OCI-LY7 (cell line): ENCODE measurements at regions of chr2 and their contacts with region 1.

Region 1: GRCh38 chr2:37039580-37039979 is 44.6 kb downstream of the HEATR5B start:
- DNase-seq: no peak
- H3K4me3 ChIP-seq: no peak overlapping the region
- H3K27ac ChIP-seq: no peak overlapping the region
- H3K4me1 ChIP-seq: no peaks in the 10 kb centered on the region
- CTCF ChIP-seq: no peak

Region 2: GRCh38 chr2:36659872-36660312 is 379.7 kb before region 1 on chr2:
- CTCF ChIA-PET with region 1: no interaction called
- POLR2A ChIA-PET with region 1: no interaction called
- intact Hi-C with region 1: no loop called
- DNase-seq: no peak
- H3K4me3 ChIP-seq: no peak overlapping the region
- H3K27ac ChIP-seq: no peak overlapping the region
- H3K4me1 ChIP-seq: no peaks in the 10 kb centered on the region
- CTCF ChIP-seq: no peak

Region 3: DNA sequence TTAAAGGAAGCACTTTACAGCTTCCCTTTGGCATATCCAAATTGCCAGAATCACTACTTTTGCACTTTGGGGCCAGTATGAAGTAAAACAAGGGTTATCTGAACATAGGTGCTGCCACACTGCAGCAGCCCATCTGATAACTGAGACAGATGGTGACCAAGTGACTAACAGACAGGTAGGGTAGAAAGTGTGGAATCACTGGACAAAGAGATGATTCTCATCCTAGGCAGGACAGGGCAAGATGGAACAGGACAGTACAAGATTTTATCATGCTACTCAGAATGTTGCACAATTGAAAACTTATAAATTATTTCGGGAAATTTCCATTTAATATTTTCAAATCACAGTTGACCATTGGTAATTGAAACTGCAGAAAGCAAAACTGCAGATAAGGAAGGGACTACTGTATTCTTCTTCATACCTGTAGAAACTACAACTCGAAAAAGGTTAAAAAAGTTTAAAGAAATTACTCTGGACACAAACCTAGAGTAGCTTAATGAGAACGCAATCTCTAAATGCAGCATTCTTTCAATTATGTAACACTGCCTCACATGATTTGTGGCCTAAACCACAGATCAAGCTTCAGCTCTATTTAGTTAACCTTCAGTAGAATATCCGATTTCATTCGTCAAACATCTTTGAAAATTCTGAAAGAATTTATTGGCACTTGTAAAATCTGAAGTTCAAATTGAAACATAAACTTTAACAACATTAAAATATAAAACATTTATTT is 13.2 kb after region 1 on chr2:
- CTCF ChIA-PET with region 1: no interaction called
- POLR2A ChIA-PET with region 1: interaction called, 12 read pairs
- intact Hi-C with region 1: no loop called
- DNase-seq: no peak
- H3K4me3 ChIP-seq: no peak overlapping the region
- H3K27ac ChIP-seq: no peak overlapping the region
- H3K4me1 ChIP-seq: no peaks in the 10 kb centered on the region
- CTCF ChIP-seq: no peak